Activated CD4-positive, alpha-beta memory T cell treated with anti-CD3 and anti-CD28 coated beads for 36 hours (primary cell): ENCODE measurements at regions of chr6 and their contacts with region 1.

Region 1: GRCh38 chr6:52419809-52420670 is at the start of gene EFHC1:
- DNase-seq: peak; percentile 99
- H3K4me3 Mint-ChIP-seq: no peak within 1 kb of the TSS
- H3K27ac Mint-ChIP-seq: no peak within 1 kb of the TSS
- H3K4me1 Mint-ChIP-seq: peaks cover 16% of the 10 kb centered on the region
- H3K27me3 Mint-ChIP-seq: no peaks in the 10 kb centered on the region
- total RNA-seq, gene EFHC1: 1.9 to 3.1 TPM

Region 2: DNA sequence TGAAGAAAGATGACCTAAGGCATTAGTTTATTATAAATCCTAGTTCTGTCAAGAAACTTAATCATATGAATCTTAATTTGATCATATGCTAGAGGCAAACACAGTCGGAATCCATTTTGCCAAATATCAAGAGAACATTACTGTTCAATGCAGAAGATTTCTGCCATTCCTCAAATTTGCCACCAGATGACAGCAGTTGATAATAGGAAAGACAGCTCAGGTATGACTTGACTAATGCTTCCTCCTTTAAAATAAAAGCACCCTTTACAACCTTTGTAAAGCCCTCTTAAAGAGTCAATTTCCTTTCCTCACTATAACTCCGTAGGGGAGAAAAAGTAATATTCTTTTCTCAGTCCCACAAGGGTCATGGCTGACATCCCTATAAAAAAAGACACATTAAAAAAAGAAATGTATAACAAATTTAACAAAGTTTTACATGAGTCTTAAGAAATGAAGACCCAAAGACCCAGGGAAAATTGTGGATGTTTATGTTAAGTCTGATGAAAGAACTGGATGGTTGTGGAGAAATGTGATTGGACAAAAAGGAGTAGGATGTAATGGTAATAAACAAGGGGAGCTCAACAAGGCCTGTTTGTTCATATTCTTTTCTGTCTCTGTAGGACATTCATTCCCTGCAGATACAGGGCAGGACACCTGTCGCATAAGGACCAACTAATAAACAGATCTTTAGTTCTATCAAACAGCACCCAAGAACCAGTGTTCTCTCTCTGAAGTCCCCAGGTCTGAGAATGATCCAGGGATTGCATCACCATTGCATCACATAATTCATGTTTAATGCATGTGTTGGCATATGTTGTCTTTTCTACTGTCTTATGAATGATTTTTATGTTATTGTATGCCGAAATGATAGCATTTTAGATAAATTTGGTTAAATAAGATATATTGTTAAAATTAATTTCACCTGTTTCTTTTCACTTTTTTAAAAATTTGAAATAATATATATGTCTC is 256.8 kb before region 1 on chr6:
- CTCF ChIA-PET with region 1: interaction called, 6 read pairs
- POLR2A ChIA-PET with region 1: no interaction called
- intact Hi-C with region 1: loop called (anchors 1 kb)
- DNase-seq: no peak
- H3K4me3 Mint-ChIP-seq: no peak overlapping the region
- H3K27ac Mint-ChIP-seq: peak overlapping the region; percentile 60
- H3K4me1 Mint-ChIP-seq: peaks cover 44% of the 10 kb centered on the region
- H3K27me3 Mint-ChIP-seq: peaks cover 30% of the 10 kb centered on the region

Region 3: GRCh38 chr6:52341561-52342260 is 78.3 kb before region 1 on chr6:
- CTCF ChIA-PET with region 1: no interaction called
- POLR2A ChIA-PET with region 1: no interaction called
- intact Hi-C with region 1: no loop called
- DNase-seq: no peak
- H3K4me3 Mint-ChIP-seq: no peak overlapping the region
- H3K27ac Mint-ChIP-seq: no peak overlapping the region
- H3K4me1 Mint-ChIP-seq: peaks cover 21% of the 10 kb centered on the region
- H3K27me3 Mint-ChIP-seq: no peaks in the 10 kb centered on the region

Region 4: GRCh38 chr6:52399511-52400312 is 20.3 kb before region 1 on chr6:
- CTCF ChIA-PET with region 1: interaction called, 13 read pairs
- POLR2A ChIA-PET with region 1: no interaction called
- intact Hi-C with region 1: loop called (anchors 2 kb)
- DNase-seq: peak; percentile 39
- H3K4me3 Mint-ChIP-seq: no peak overlapping the region
- H3K27ac Mint-ChIP-seq: peak overlapping the region; percentile 40
- H3K4me1 Mint-ChIP-seq: peaks cover 63% of the 10 kb centered on the region
- H3K27me3 Mint-ChIP-seq: no peaks in the 10 kb centered on the region

Region 5: GRCh38 chr6:52577022-52577777 is 157.2 kb after region 1 on chr6 and contains the start of gene TRAM2:
- CTCF ChIA-PET with region 1: interaction called, 6 read pairs
- POLR2A ChIA-PET with region 1: no interaction called
- intact Hi-C with region 1: loop called (anchors 1 kb)
- DNase-seq: peak; percentile 70
- H3K4me3 Mint-ChIP-seq: peak within 1 kb of the TSS; percentile 77
- H3K27ac Mint-ChIP-seq: peak within 1 kb of the TSS; percentile 59
- H3K4me1 Mint-ChIP-seq: peaks cover 29% of the 10 kb centered on the region
- H3K27me3 Mint-ChIP-seq: no peaks in the 10 kb centered on the region
- total RNA-seq, gene TRAM2: 2.4 to 2.6 TPM

Region 6: GRCh38 chr6:52647199-52647598 is 227.2 kb after region 1 on chr6:
- CTCF ChIA-PET with region 1: interaction called, 19 read pairs
- POLR2A ChIA-PET with region 1: no interaction called
- intact Hi-C with region 1: loop called (anchors 1 kb)
- DNase-seq: peak; percentile 21
- H3K4me3 Mint-ChIP-seq: no peak overlapping the region
- H3K27ac Mint-ChIP-seq: no peak overlapping the region
- H3K4me1 Mint-ChIP-seq: peaks cover 8% of the 10 kb centered on the region
- H3K27me3 Mint-ChIP-seq: peaks cover 13% of the 10 kb centered on the region

Region 7: DNA sequence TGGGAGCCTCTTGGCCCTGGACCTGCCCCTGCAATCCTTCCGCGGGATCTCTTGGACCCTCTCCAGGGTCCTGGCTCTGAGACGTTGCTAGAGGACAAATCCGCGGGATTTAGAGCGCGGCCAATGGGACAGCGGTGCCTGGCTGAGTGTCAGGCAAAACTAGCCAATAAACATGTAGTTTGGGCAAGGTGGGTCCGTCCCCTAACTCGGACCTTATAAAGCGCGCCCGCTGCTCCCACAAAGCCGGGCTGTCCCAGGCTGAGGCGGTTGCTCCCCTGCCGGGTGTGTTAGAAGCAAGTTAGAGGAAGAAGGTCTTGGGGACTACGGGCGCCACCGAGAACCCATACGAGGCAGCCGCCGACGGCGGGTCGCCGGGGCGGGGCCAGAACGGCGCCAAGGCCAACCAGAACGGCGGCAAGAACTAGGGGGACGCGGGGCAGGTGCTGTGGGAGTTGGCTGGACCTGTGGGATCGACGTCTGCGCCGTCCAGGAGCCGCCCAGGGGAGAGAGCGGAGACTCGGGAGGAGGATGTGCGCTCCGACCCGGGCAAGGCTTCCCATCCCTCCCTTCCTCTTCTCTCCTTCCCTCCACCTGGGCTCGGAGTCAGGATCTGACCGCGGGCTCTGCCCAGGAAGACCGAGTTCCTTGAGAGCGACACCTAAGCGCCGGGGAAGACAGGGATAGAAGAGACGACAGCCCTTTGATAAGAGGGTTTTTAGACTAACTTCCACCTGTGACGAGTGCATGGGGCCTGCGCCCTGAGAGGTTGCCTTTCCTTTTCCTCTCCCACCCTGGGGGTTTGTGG is 244.3 kb after region 1 on chr6:
- CTCF ChIA-PET with region 1: interaction called, 87 read pairs
- POLR2A ChIA-PET with region 1: no interaction called
- intact Hi-C with region 1: loop called (anchors 1 kb)
- DNase-seq: peak; percentile 84
- H3K4me3 Mint-ChIP-seq: no peak overlapping the region
- H3K27ac Mint-ChIP-seq: no peak overlapping the region
- H3K4me1 Mint-ChIP-seq: peaks cover 8% of the 10 kb centered on the region
- H3K27me3 Mint-ChIP-seq: no peaks in the 10 kb centered on the region